PC-9 (cell line): ENCODE measurements at regions of chr7 and their contacts with region 1.

Region 1: GRCh38 chr7:44573464-44574286 is at the start of gene DDX56:
- DNase-seq: peak; percentile 92 to 95
- H3K4me3 ChIP-seq: peak within 1 kb of the TSS; percentile 84
- H3K27ac ChIP-seq: peak within 1 kb of the TSS; percentile 33
- H3K4me1 ChIP-seq: peaks cover 23% of the 10 kb centered on the region
- H3K27me3 ChIP-seq: no peaks in the 10 kb centered on the region
- CTCF ChIP-seq: no peak
- total RNA-seq, gene DDX56: 113 and 125 TPM in 2 replicates

Region 2: GRCh38 chr7:44338600-44338999 is 235.1 kb before region 1 on chr7:
- CTCF ChIA-PET with region 1: no interaction called
- POLR2A ChIA-PET with region 1: interaction called, 10 read pairs
- intact Hi-C with region 1: no loop called
- DNase-seq: no peak
- H3K4me3 ChIP-seq: no peak overlapping the region
- H3K27ac ChIP-seq: no peak overlapping the region
- H3K4me1 ChIP-seq: no peaks in the 10 kb centered on the region
- H3K27me3 ChIP-seq: peaks cover 20% of the 10 kb centered on the region
- CTCF ChIP-seq: no peak

Region 3: DNA sequence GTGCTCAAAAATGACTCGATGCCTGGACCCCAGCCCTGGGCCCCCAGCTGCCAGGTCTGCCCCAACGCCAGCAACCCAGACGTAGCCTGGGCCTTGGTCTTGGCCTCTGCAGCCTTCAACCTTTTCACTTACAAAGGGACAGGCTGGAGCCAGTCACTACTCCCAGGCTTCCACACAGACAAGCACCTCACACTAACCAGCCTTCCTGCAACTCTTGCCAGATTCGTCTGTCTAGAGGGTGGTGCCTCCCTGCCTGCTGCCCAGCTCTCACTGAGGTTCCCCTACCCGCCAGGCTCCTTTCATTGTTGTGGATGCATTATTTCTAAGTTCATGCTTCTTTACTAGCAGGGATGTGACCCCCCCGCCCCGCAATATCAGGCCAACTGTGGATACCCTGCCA is 139.5 kb before region 1 on chr7:
- CTCF ChIA-PET with region 1: no interaction called
- POLR2A ChIA-PET with region 1: no interaction called
- intact Hi-C with region 1: no loop called
- DNase-seq: peak in 1 of 2 experiments; percentile 28
- H3K4me3 ChIP-seq: no peak overlapping the region
- H3K27ac ChIP-seq: no peak overlapping the region
- H3K4me1 ChIP-seq: no peaks in the 10 kb centered on the region
- H3K27me3 ChIP-seq: no peaks in the 10 kb centered on the region
- CTCF ChIP-seq: no peak

Region 4: DNA sequence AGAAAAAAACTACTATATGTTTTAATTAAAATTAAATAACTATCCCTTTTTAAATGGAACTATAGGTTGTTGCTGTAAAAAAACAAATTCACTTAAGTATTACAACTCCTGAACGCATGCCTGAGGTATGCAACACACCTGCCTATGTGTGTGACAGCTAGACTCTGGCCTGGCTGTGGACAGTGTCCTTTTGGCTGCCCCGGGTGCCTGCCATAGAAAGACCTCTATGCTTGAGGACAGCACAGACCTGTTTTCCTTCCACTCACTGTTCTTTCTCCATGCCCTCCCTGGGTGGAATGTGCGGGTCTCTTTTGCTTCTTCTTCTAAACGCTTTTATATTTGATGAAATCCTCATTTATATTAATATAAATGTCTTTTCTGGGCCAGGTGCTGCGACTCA is 216.3 kb after region 1 on chr7:
- CTCF ChIA-PET with region 1: no interaction called
- POLR2A ChIA-PET with region 1: interaction called, 14 read pairs
- intact Hi-C with region 1: no loop called
- DNase-seq: no peak
- H3K4me3 ChIP-seq: no peak overlapping the region
- H3K27ac ChIP-seq: no peak overlapping the region
- H3K4me1 ChIP-seq: no peaks in the 10 kb centered on the region; the same call in 1 of the 2 replicates
- H3K27me3 ChIP-seq: no peaks in the 10 kb centered on the region
- CTCF ChIP-seq: no peak

Region 5: GRCh38 chr7:44973610-44974401 is 400.1 kb after region 1 on chr7:
- CTCF ChIA-PET with region 1: no interaction called
- POLR2A ChIA-PET with region 1: no interaction called
- intact Hi-C with region 1: no loop called
- DNase-seq: peak in 1 of 2 experiments; percentile 50
- H3K4me3 ChIP-seq: no peak overlapping the region
- H3K27ac ChIP-seq: no peak overlapping the region
- H3K4me1 ChIP-seq: no peaks in the 10 kb centered on the region
- H3K27me3 ChIP-seq: no peaks in the 10 kb centered on the region
- CTCF ChIP-seq: peak; percentile 66

Region 6: GRCh38 chr7:45420843-45421495 is 847.3 kb after region 1 on chr7:
- CTCF ChIA-PET with region 1: no interaction called
- POLR2A ChIA-PET with region 1: no interaction called
- intact Hi-C with region 1: no loop called
- DNase-seq: no peak
- H3K4me3 ChIP-seq: no peak overlapping the region
- H3K27ac ChIP-seq: no peak overlapping the region
- H3K4me1 ChIP-seq: no peaks in the 10 kb centered on the region
- H3K27me3 ChIP-seq: no peaks in the 10 kb centered on the region
- CTCF ChIP-seq: no peak